ENCODE measurements at regions of chr9 and their contacts with region 1.

Region 1: DNA sequence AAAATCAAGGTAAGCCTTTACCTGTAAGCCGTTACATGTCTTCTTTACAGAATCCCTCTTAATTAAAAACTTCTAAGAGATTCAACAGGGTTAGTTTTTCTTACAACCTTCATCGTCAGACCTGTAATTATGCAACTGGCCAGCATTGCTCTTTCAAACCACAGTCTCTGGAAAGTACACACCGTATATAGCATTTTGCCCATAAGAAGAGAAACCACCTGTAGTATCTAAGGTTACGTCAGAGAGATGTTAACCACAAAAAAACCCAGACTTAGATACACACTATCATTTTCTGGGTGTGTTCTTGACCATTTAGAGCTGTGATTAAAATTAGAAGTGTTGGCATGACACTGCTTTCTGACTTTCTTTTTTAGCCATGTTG is 140.0 kb downstream of the MUSK start:
- DNase-seq: peak; percentile 93
- ATAC-seq: peak; percentile 90
- H3K4me3 ChIP-seq: 0 out of 2 replicates have a peak overlapping the region, but pooled peaks have one; percentile 28
- H3K27ac ChIP-seq: peak overlapping the region; percentile 90
- H3K4me1 ChIP-seq: peaks cover 18% of the 10 kb centered on the region
- H3K27me3 ChIP-seq: no peaks in the 10 kb centered on the region
- CTCF ChIP-seq: no peak
- EP300 ChIP-seq: peak; percentile 97 to 98
- POLR2A ChIP-seq: no peak
- RAD21 ChIP-seq: no peak; the same call in 1 of the 2 replicates

Region 2: GRCh38 chr9:110256380-110257096 is 552.1 kb before region 1 on chr9 and contains the start of gene TXN:
- CTCF ChIA-PET with region 1: no interaction called
- POLR2A ChIA-PET with region 1: no interaction called
- RAD21 ChIA-PET with region 1: no interaction called
- SMC1A ChIA-PET with region 1: no interaction called
- in situ Hi-C with region 1: no loop called
- intact Hi-C with region 1: loop called (anchors 5 kb)
- DNase-seq: peak; percentile 87
- ATAC-seq: peak; percentile 69
- H3K4me3 ChIP-seq: peak within 1 kb of the TSS; percentile 92
- H3K27ac ChIP-seq: peak within 1 kb of the TSS; percentile 91
- H3K4me1 ChIP-seq: peaks cover 24% of the 10 kb centered on the region
- H3K27me3 ChIP-seq: no peaks in the 10 kb centered on the region
- CTCF ChIP-seq: no peak
- EP300 ChIP-seq: peak; percentile 41 to 47; a peak in 1 of 4 replicates
- POLR2A ChIP-seq: peak; percentile 99
- RAD21 ChIP-seq: no peak
- polyA plus RNA-seq, gene TXN: 2,263 to 2,304 TPM

Region 3: DNA sequence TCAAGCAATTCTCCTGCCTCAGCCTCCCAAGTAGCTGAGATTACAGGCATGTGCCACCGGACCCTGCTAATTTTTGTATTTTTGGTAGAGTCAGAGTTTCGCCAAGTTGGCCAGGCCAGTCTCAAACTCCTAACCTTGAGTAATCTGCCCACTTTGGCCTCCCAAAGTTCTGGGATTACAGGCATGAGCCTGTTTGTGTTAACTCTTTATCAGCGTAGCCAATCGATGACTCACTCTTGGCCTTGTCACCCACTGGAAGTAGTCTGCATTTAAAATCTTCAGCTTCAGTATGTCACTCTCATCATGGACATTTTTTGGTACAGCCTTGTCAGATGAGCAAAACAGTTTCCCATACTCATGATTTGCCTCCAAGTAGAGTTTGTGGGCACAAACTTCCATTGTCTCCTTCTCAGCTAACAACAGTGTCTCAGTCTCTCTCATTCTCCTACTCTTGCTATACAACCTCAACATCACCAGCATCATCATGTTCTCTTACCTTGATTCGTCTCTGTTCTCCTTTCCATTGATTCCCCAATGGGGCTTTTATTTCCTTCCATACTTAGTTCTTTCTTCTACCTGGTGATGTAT is 117.5 kb before region 1 on chr9:
- CTCF ChIA-PET with region 1: no interaction called
- POLR2A ChIA-PET with region 1: no interaction called
- RAD21 ChIA-PET with region 1: no interaction called
- SMC1A ChIA-PET with region 1: no interaction called
- in situ Hi-C with region 1: no loop called
- intact Hi-C with region 1: loop called (anchors 10 kb)
- DNase-seq: no peak
- ATAC-seq: no peak
- H3K4me3 ChIP-seq: no peak overlapping the region
- H3K27ac ChIP-seq: no peak overlapping the region
- H3K4me1 ChIP-seq: no peaks in the 10 kb centered on the region
- H3K27me3 ChIP-seq: no peaks in the 10 kb centered on the region
- CTCF ChIP-seq: no peak
- EP300 ChIP-seq: no peak
- POLR2A ChIP-seq: no peak
- RAD21 ChIP-seq: no peak

Region 4: DNA sequence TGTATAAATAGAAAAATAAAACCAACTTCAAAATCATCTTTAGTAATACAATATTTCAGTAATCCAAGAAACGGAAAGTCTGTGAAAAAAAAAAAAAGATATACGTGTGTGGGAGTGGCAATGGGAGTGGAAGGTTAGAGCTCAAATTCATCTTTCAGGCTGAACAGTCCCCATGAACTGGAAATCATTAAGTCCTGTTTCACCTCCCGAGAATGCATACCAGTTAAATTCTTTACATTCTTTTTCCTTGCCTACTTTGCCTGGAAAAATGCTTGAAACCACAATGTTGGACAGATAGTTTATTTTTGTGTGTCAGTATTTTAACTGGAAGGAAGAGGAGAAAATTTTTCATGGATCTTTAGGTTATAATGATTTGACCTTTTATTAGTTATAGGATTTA is 26.8 kb after region 1 on chr9:
- CTCF ChIA-PET with region 1: no interaction called
- POLR2A ChIA-PET with region 1: interaction called, 11 read pairs
- RAD21 ChIA-PET with region 1: interaction called, 5 read pairs
- SMC1A ChIA-PET with region 1: interaction called, 5 read pairs
- in situ Hi-C with region 1: no loop called
- intact Hi-C with region 1: loop called (anchors 2 kb)
- DNase-seq: no peak
- ATAC-seq: no peak
- H3K4me3 ChIP-seq: no peak overlapping the region
- H3K27ac ChIP-seq: no peak overlapping the region
- H3K4me1 ChIP-seq: no peaks in the 10 kb centered on the region
- H3K27me3 ChIP-seq: no peaks in the 10 kb centered on the region
- CTCF ChIP-seq: no peak
- EP300 ChIP-seq: no peak
- POLR2A ChIP-seq: no peak
- RAD21 ChIP-seq: no peak

Region 5: DNA sequence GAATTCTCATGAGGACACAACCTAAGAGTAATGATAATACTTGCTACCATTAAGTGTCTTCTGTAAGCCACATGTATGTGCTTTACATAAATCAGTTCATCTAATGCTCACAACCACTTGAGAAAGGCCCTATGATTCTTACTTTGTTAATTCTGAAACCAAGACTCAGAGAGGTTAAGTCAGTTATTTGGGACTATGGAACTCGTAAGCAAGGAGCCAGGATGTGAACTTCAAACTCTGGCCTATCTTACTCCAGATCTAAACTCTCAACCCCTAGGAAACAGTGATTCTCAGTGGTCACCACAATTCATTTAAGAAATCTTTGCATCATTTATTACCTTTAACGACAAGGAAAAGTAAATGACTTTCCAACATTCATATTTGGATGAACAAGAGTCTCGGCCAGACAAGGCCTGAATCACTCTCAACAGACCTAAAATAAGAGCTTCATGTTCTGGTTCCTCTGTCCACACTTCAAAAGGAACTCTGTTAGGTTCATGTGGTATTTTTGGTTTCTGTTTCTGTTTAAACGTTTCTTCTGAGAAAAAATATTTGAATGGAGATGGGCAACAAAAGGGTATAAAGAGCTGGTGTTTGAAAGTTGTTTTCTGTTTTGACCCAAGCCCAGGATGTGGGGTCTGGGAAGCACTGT is 124.9 kb after region 1 on chr9:
- CTCF ChIA-PET with region 1: no interaction called
- POLR2A ChIA-PET with region 1: interaction called, 7 read pairs
- RAD21 ChIA-PET with region 1: interaction called, 11 read pairs
- SMC1A ChIA-PET with region 1: interaction called, 6 read pairs
- in situ Hi-C with region 1: no loop called
- intact Hi-C with region 1: loop called (anchors 5 kb)
- DNase-seq: peak; percentile 41
- ATAC-seq: peak; percentile 80
- H3K4me3 ChIP-seq: peak overlapping the region; percentile 5; the same call in 1 of the 2 replicates
- H3K27ac ChIP-seq: peak overlapping the region; percentile 47
- H3K4me1 ChIP-seq: peaks cover 10% of the 10 kb centered on the region
- H3K27me3 ChIP-seq: no peaks in the 10 kb centered on the region
- CTCF ChIP-seq: no peak
- EP300 ChIP-seq: 0 out of 4 replicates have a peak, but pooled peaks of 1 of the 2 experiments have one; percentile 15
- POLR2A ChIP-seq: no peak
- RAD21 ChIP-seq: no peak